ENCODE measurements at regions of chr6 and their contacts with region 1.

Region 1: DNA sequence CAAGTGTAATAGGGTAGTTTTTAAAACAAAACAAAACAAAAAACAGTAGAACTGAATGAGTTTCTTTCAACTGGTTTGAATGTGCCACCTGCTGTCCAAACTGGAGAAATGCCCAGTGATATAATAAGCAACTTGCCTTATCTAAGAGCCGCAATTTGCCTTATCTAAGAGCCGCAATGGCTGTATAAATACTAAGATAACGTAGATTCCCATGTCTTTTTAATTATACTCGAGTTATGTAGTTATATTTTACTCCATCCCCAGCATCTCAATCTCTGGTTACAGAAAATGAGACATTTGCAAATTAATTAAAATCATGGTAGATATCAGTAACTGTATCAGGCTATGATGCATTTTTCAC is 67.2 kb downstream of the RPP40 start:
- DNase-seq: no peak
- ATAC-seq: no peak
- H3K4me3 ChIP-seq: no peak overlapping the region
- H3K27ac ChIP-seq: no peak overlapping the region; the same call in 1 of the 2 replicates
- H3K4me1 ChIP-seq: peaks cover 2% of the 10 kb centered on the region
- H3K27me3 ChIP-seq: no peaks in the 10 kb centered on the region
- CTCF ChIP-seq: peak; percentile 69; the same call in 1 of the 2 replicates

Region 2: GRCh38 chr6:4775584-4776494 is 160.8 kb before region 1 on chr6 and contains the start of gene CDYL:
- CTCF ChIA-PET with region 1: no interaction called
- POLR2A ChIA-PET with region 1: no interaction called
- in situ Hi-C with region 1: no loop called
- intact Hi-C with region 1: loop called (anchors 5 kb)
- DNase-seq: no peak
- ATAC-seq: peak; percentile 92
- H3K4me3 ChIP-seq: peak within 1 kb of the TSS; percentile 67 to 85
- H3K27ac ChIP-seq: peak within 1 kb of the TSS; percentile 89
- H3K4me1 ChIP-seq: peaks cover 25% of the 10 kb centered on the region
- H3K27me3 ChIP-seq: peaks cover 12% of the 10 kb centered on the region
- CTCF ChIP-seq: peak; percentile 44
- total RNA-seq, gene CDYL: 61.4 TPM

Region 3: GRCh38 chr6:4997862-4998261 is 61.2 kb after region 1 on chr6:
- CTCF ChIA-PET with region 1: no interaction called
- POLR2A ChIA-PET with region 1: no interaction called
- in situ Hi-C with region 1: no loop called
- intact Hi-C with region 1: no loop called
- DNase-seq: no peak
- ATAC-seq: no peak
- H3K4me3 ChIP-seq: no peak overlapping the region
- H3K27ac ChIP-seq: no peak overlapping the region
- H3K4me1 ChIP-seq: no peaks in the 10 kb centered on the region
- H3K27me3 ChIP-seq: no peaks in the 10 kb centered on the region
- CTCF ChIP-seq: no peak

Measured in Panc1 (cell line).